Calu3 (cell line): ENCODE measurements at regions of chr3 and their contacts with region 1.

Region 1: DNA sequence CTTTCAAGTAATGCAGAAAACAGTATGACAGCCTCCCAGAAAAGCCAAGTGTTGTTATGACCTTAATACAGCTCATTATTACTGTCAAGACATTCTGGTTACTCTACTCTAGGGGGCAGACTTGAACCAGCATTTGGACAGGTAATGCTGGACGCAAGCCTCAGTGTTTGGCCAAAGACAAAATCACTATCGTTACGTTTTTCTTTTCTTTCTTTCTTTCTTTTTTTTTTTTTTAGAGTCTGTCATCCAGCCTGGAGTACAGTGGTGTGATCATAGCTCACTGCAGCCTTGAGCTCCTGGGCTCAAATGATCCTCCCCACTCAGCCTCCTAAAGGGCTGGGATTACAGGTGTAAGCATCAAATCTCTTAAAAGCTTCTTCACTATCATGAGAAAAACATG is 29.4 kb upstream of the TMEM45A start:
- DNase-seq: peak; percentile 50
- H3K4me3 Mint-ChIP-seq: no peak overlapping the region
- H3K27ac Mint-ChIP-seq: no peak overlapping the region
- H3K4me1 Mint-ChIP-seq: peaks cover 10% of the 10 kb centered on the region
- H3K27me3 Mint-ChIP-seq: no peaks in the 10 kb centered on the region
- CTCF ChIP-seq: peak; percentile 46

Region 2: GRCh38 chr3:100260685-100261484 is 202.1 kb before region 1 on chr3 and contains the start of gene TBC1D23:
- CTCF ChIA-PET with region 1: no interaction called
- intact Hi-C with region 1: no loop called
- DNase-seq: peak; percentile 96
- H3K4me3 Mint-ChIP-seq: peak within 1 kb of the TSS; percentile 82
- H3K27ac Mint-ChIP-seq: peak within 1 kb of the TSS; percentile 87
- H3K4me1 Mint-ChIP-seq: peaks cover 33% of the 10 kb centered on the region
- H3K27me3 Mint-ChIP-seq: no peaks in the 10 kb centered on the region
- CTCF ChIP-seq: no peak
- total RNA-seq, gene TBC1D23: 26.1 and 27.6 TPM in 2 replicates

Region 3: GRCh38 chr3:100603469-100603868 is 140.5 kb after region 1 on chr3:
- CTCF ChIA-PET with region 1: interaction called, 15 read pairs
- intact Hi-C with region 1: no loop called
- DNase-seq: peak; percentile 38
- H3K4me3 Mint-ChIP-seq: peak overlapping the region; percentile 49
- H3K27ac Mint-ChIP-seq: peak overlapping the region; percentile 60
- H3K4me1 Mint-ChIP-seq: peaks cover 62% of the 10 kb centered on the region
- H3K27me3 Mint-ChIP-seq: no peaks in the 10 kb centered on the region
- CTCF ChIP-seq: peak; percentile 38

Region 4: GRCh38 chr3:100634493-100635272 is 171.7 kb after region 1 on chr3:
- CTCF ChIA-PET with region 1: interaction called, 47 read pairs
- intact Hi-C with region 1: loop called (anchors 1 kb)
- DNase-seq: peak; percentile 83
- H3K4me3 Mint-ChIP-seq: peak overlapping the region; percentile 48
- H3K27ac Mint-ChIP-seq: peak overlapping the region; percentile 88
- H3K4me1 Mint-ChIP-seq: peaks cover 39% of the 10 kb centered on the region
- H3K27me3 Mint-ChIP-seq: no peaks in the 10 kb centered on the region
- CTCF ChIP-seq: no peak

Region 5: GRCh38 chr3:100708967-100709841 is 246.2 kb after region 1 on chr3 and contains the start of gene TFG:
- CTCF ChIA-PET with region 1: interaction called, 13 read pairs
- intact Hi-C with region 1: no loop called
- DNase-seq: peak; percentile 98
- H3K4me3 Mint-ChIP-seq: peak within 1 kb of the TSS; percentile 80
- H3K27ac Mint-ChIP-seq: peak within 1 kb of the TSS; percentile 94
- H3K4me1 Mint-ChIP-seq: peaks cover 41% of the 10 kb centered on the region
- H3K27me3 Mint-ChIP-seq: no peaks in the 10 kb centered on the region
- CTCF ChIP-seq: no peak
- total RNA-seq, gene TFG: 139 and 143 TPM in 2 replicates

Region 6: GRCh38 chr3:100796556-100796955 is 333.6 kb after region 1 on chr3:
- CTCF ChIA-PET with region 1: interaction called, 11 read pairs
- intact Hi-C with region 1: no loop called
- DNase-seq: no peak
- H3K4me3 Mint-ChIP-seq: no peak overlapping the region
- H3K27ac Mint-ChIP-seq: no peak overlapping the region
- H3K4me1 Mint-ChIP-seq: no peaks in the 10 kb centered on the region
- H3K27me3 Mint-ChIP-seq: no peaks in the 10 kb centered on the region
- CTCF ChIP-seq: peak; percentile 22

Region 7: GRCh38 chr3:100875239-100875638 is 412.2 kb after region 1 on chr3:
- CTCF ChIA-PET with region 1: no interaction called
- intact Hi-C with region 1: no loop called
- DNase-seq: peak; percentile 41
- H3K4me3 Mint-ChIP-seq: no peak overlapping the region
- H3K27ac Mint-ChIP-seq: no peak overlapping the region
- H3K4me1 Mint-ChIP-seq: peaks cover 12% of the 10 kb centered on the region
- H3K27me3 Mint-ChIP-seq: no peaks in the 10 kb centered on the region
- CTCF ChIP-seq: no peak